Sigmoid colon (tissue), 7 donors: ENCODE measurements at regions of chr13 and their contacts with region 1.

Region 1: GRCh38 chr13:97855570-97856303 is 97.7 kb upstream of the IPO5 start:
- DNase-seq: peak; percentile 69
- H3K4me3 ChIP-seq: no peak overlapping the region
- H3K27ac ChIP-seq: no peak overlapping the region
- H3K4me1 ChIP-seq: peaks cover 0 to 9% (median 3%) of the 10 kb centered on the region in 4 donors
- H3K27me3 ChIP-seq: no peaks in the 10 kb centered on the region
- CTCF ChIP-seq: peak; percentile 28 to 81 (median 66)
- EP300 ChIP-seq: no peak
- POLR2A ChIP-seq: no peak

Region 2: GRCh38 chr13:97810152-97810551 is 45.6 kb before region 1 on chr13:
- intact Hi-C with region 1: no loop called
- DNase-seq: no peak
- H3K4me3 ChIP-seq: no peak overlapping the region
- H3K27ac ChIP-seq: no peak overlapping the region
- H3K4me1 ChIP-seq: no peaks in the 10 kb centered on the region
- H3K27me3 ChIP-seq: no peaks in the 10 kb centered on the region
- CTCF ChIP-seq: no peak
- EP300 ChIP-seq: no peak
- POLR2A ChIP-seq: no peak

Region 3: DNA sequence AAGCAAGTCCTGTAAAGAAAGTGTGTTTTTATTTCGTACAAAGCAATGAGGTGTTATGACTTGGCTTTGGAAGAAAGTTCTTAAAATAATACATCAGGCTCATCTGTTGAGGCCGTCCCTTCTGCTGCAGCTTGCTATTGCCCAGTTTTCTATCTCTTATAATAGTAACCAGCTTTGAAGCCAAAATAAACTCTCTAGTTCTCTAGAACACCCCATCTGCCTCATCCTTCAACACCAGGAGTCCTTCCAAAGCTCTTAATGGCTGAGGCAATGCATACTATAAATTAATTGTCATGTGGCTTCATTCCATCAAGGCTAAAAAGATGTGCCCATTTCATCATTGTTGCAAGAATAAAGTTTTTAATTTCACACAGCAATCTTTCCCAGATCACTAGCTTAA is 48.3 kb after region 1 on chr13:
- intact Hi-C with region 1: loop called (anchors 5 kb)
- DNase-seq: no peak
- H3K4me3 ChIP-seq: no peak overlapping the region
- H3K27ac ChIP-seq: peak overlapping the region in 1 of 4 donors; percentile 51
- H3K4me1 ChIP-seq: peaks cover 0 to 38% (median 21%) of the 10 kb centered on the region in 4 donors
- H3K27me3 ChIP-seq: no peaks in the 10 kb centered on the region
- CTCF ChIP-seq: no peak
- EP300 ChIP-seq: no peak
- POLR2A ChIP-seq: no peak

Region 4: DNA sequence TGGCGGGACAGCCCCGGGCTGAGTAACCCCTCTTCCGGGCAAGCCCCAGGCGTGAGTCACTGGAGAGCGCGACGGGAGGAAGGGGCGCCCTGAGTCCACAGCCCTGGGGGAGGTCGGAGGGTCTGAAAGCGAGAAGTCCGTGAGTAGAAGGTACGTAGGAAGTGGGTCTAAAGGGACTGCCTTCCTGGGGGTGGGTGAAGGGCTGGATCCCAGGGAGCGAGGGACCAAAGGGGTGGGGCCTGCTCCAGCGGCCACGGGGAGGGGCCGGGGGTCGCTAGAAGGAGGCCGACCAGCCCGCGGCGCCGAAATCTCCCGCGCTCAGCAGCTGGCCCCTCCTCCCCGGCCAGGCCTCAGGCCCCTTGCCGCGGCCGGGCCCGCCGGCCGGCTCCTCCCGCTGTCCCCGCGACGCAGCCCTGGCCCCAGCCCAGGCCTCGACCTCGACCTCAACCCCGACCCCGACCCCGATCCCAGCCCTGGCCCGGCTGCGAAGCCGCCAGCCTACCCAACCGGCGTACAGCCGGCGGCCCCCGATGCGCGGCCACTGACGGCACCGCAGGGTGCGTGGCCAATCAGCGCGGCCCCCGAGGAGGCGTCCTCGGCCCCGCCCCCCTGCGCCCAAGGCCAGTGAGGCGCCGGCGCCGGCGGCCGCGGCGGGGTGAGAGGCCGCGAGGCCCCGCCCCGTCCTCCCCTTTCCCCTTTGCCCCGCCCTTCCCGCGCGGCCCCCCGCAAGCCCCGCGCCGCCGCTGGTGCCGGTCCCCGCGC is 120.3 kb after region 1 on chr13:
- intact Hi-C with region 1: loop called (anchors 2 kb)
- DNase-seq: peak; percentile 94
- H3K4me3 ChIP-seq: peak overlapping the region; percentile 80 to 96 (median 86)
- H3K27ac ChIP-seq: peak overlapping the region; percentile 95 to 98 (median 97)
- H3K4me1 ChIP-seq: peaks cover 0 to 38% (median 30%) of the 10 kb centered on the region in 4 donors
- H3K27me3 ChIP-seq: no peaks in the 10 kb centered on the region
- CTCF ChIP-seq: no peak
- EP300 ChIP-seq: no peak
- POLR2A ChIP-seq: peak in 1 of 2 donors; percentile 28

Region 5: DNA sequence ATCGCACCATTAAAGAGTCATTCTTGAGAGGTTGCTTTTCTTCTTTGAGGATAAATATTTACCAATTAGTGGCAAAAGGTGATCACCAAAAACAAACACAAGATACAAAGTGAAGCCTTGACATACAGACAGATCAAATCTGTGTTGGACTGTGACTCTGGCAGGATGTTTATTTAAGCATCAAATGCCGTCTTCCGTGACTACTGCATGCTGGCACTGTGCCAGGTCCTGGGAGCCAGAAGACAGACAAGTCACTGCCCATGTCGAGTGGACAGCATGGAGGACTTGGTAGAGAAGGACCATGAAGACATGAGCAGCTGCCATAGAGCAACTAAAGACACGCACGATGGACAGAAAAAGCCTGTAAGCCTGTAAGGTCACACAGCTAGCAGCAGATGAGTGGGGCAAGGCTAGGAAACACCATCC is 194.3 kb after region 1 on chr13:
- intact Hi-C with region 1: no loop called
- DNase-seq: no peak
- H3K4me3 ChIP-seq: no peak overlapping the region
- H3K27ac ChIP-seq: no peak overlapping the region
- H3K4me1 ChIP-seq: no peaks in the 10 kb centered on the region
- H3K27me3 ChIP-seq: no peaks in the 10 kb centered on the region
- CTCF ChIP-seq: no peak
- EP300 ChIP-seq: no peak
- POLR2A ChIP-seq: no peak

Region 6: DNA sequence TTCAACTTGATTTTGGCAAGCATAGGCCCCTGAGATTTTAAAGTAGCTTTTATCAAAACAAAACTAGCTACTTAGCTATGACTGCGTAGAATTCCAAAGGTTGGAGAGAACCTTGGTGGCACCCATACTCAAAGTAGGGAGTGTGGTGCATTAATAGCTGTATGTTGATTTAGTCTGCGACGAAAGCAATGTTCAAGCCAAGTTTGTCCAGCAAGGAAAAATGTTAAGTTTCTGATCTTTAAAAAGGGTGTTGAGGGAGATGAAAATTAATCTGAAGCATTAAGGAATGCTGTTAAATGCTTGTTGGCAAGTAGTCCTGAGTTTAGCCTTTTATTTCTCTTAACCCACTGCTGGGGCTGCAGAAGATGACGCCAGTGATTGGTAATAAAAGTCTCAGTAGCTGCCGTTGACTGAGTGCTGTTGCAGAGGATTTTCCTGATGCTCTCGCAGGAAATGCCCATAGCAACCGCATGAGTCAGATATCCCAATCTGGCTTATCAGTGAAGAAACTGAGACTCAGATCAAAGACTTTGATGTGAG is 397.3 kb after region 1 on chr13:
- intact Hi-C with region 1: no loop called
- DNase-seq: no peak
- H3K4me3 ChIP-seq: no peak overlapping the region
- H3K27ac ChIP-seq: peak overlapping the region; percentile 44 to 70 (median 56)
- H3K4me1 ChIP-seq: peaks cover 0 to 35% (median 22%) of the 10 kb centered on the region in 4 donors
- H3K27me3 ChIP-seq: no peaks in the 10 kb centered on the region
- CTCF ChIP-seq: no peak
- EP300 ChIP-seq: no peak
- POLR2A ChIP-seq: no peak

Region 7: DNA sequence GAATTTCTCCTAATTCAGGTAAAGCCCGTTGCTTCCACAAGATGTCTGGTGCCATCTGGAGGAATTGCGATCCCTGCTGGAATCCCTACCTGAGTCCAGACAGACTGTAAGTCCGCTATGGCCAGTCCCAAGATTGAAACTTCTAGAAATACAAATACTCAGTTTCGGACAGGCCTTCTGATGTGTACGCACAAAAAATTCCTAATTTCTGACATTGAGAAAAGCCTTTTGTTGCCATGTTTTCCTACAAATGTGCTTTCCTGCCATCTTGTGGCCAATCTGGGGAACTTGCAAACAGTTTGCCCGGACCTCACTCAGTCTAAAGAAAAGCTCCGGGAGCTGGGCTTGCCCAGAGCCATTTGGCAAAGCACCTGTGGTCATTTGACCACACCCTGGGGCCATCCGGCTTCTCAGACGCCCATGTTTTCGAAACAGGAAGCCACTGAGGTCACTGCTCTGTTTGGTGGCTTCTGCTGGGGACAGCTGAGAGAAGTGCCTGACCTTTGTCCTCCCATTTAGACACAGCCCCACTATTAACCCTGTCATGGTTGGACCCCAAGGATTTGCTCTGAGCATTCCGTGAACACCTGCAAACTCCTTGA is 817.3 kb after region 1 on chr13:
- intact Hi-C with region 1: loop called (anchors 5 kb)
- DNase-seq: peak; percentile 84
- H3K4me3 ChIP-seq: peak overlapping the region in 1 of 4 donors; percentile 2
- H3K27ac ChIP-seq: no peak overlapping the region
- H3K4me1 ChIP-seq: peaks cover 0 to 11% (median 3%) of the 10 kb centered on the region in 4 donors
- H3K27me3 ChIP-seq: no peaks in the 10 kb centered on the region
- CTCF ChIP-seq: peak; percentile 29 to 84 (median 76)
- EP300 ChIP-seq: no peak
- POLR2A ChIP-seq: no peak